Activated CD4-positive, alpha-beta memory T cell treated with anti-CD3 and anti-CD28 coated beads for 36 hours (primary cell): ENCODE measurements at regions of chr9 and their contacts with region 1.

Region 1: GRCh38 chr9:21688108-21689102 is 114.0 kb upstream of the MTAP start:
- DNase-seq: no peak
- H3K4me3 Mint-ChIP-seq: no peak overlapping the region
- H3K27ac Mint-ChIP-seq: no peak overlapping the region
- H3K4me1 Mint-ChIP-seq: peaks cover 40% of the 10 kb centered on the region
- H3K27me3 Mint-ChIP-seq: no peaks in the 10 kb centered on the region

Region 2: DNA sequence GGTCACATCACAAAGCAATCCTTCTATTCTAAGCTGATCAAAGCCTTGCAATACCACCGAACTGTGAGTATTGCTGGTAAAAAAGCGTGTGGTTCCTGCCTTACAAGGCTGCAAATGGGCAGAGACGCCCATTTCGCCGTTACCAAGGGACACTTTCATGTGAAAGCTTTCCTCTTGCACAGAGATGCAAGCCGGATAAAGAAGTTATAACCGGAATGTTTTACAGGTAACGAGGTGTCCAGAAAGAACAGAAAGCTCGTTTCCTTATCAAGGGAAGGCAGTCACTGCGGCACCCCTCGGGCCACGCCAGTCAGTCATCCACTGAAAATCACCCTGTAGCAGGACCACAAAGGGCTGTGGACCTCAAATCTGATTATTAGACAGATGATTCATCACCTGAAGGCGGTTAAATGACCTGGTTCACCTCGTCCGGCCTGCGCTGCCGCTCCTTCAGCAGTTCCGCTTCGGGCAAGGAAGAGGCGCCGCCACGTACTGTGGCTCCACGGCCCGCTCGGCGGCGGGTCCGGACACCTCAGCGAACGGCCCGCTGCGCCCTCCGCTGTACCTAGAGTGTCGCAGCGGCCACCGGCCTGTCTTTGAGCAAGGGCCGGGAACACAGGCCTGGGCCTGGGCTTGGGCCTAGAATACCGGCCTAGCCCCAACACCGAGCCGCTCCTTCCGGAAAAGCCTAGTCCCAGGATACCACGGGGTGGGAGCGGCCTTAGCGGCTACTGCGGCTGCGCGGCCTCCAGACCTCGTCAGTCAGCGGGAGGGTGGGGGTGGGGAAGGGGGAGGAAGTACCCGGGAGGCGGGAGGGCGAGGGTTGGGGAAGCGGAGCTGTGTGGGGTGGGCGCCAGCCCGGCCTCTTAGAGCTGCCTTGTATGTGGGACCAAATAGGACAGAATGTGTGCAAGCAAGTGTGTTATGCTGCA is 353.4 kb before region 1 on chr9 and contains the start of gene KLHL9:
- CTCF ChIA-PET with region 1: no interaction called
- POLR2A ChIA-PET with region 1: interaction called, 5 read pairs
- intact Hi-C with region 1: loop called (anchors 10 kb)
- DNase-seq: peak; percentile 92
- H3K4me3 Mint-ChIP-seq: peak within 1 kb of the TSS; percentile 86
- H3K27ac Mint-ChIP-seq: peak within 1 kb of the TSS; percentile 87
- H3K4me1 Mint-ChIP-seq: peaks cover 50% of the 10 kb centered on the region
- H3K27me3 Mint-ChIP-seq: no peaks in the 10 kb centered on the region
- total RNA-seq, gene KLHL9: 15.9 to 16.0 TPM

Region 3: GRCh38 chr9:21591221-21592062 is 97.0 kb before region 1 on chr9:
- CTCF ChIA-PET with region 1: no interaction called
- POLR2A ChIA-PET with region 1: no interaction called
- intact Hi-C with region 1: loop called (anchors 1 kb)
- DNase-seq: peak; percentile 80
- H3K4me3 Mint-ChIP-seq: no peak overlapping the region
- H3K27ac Mint-ChIP-seq: no peak overlapping the region
- H3K4me1 Mint-ChIP-seq: peaks cover 15% of the 10 kb centered on the region
- H3K27me3 Mint-ChIP-seq: no peaks in the 10 kb centered on the region

Region 4: GRCh38 chr9:21611896-21612295 is 76.5 kb before region 1 on chr9:
- CTCF ChIA-PET with region 1: no interaction called
- POLR2A ChIA-PET with region 1: no interaction called
- intact Hi-C with region 1: loop called (anchors 1 kb)
- DNase-seq: peak; percentile 24
- H3K4me3 Mint-ChIP-seq: no peak overlapping the region
- H3K27ac Mint-ChIP-seq: no peak overlapping the region
- H3K4me1 Mint-ChIP-seq: peaks cover 22% of the 10 kb centered on the region
- H3K27me3 Mint-ChIP-seq: no peaks in the 10 kb centered on the region

Region 5: GRCh38 chr9:21761309-21761901 is 73.0 kb after region 1 on chr9:
- CTCF ChIA-PET with region 1: no interaction called
- POLR2A ChIA-PET with region 1: no interaction called
- intact Hi-C with region 1: loop called (anchors 1 kb)
- DNase-seq: peak; percentile 42
- H3K4me3 Mint-ChIP-seq: no peak overlapping the region
- H3K27ac Mint-ChIP-seq: no peak overlapping the region
- H3K4me1 Mint-ChIP-seq: peaks cover 10% of the 10 kb centered on the region
- H3K27me3 Mint-ChIP-seq: peaks cover 40% of the 10 kb centered on the region